Motor neuron (in vitro differentiated cells): ENCODE measurements at regions of chr11 and their contacts with region 1.

Region 1: DNA sequence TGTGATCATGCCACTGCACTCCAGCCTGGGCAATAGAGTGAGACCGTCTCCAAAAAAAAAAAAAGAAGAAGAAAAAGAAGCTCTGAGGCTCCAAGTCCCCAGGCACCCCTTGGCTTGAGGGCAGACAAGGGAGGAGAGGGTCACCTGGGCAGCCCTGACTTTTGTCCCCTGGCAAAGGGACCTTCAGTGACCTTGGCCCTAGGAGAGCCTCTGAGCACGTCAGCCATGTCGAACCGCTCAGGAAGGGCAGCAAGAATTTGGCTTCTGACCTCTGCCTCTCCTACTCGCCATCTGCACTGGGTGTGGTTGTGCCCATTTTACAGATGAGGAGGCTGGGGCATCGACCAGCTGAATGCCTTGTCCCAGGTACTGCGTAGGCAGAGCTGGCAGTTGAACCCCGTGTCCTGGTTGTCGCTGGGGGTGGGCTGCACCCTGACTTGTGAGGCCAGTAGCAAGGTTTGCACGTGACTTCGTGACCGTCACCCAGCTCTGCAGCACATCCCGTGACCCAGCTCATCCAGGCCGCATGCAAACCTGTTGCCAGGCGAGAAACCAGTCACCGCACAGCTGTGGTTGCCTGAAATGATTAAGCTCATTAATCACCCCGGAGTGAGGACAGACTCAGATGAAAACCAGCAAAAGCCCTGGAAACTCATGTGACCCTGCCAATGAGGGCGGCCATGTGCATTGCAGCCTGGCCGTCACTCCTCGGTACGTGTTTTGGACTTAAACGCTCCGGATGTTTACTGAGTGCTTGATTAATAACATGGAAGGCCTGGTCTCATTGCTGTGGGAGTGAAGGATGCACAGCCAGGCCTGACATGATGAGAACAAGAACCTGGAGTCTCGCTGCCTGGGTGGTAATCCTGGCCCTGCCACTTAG is 47.7 kb upstream of the PPP6R3 start:
- ATAC-seq: peak in 7 of 8 experiments; percentile 58 to 92 (median 83)
- H3K4me3 ChIP-seq: no peak overlapping the region
- H3K27ac ChIP-seq: peak overlapping the region in 1 of 2 donors; percentile 69
- H3K4me1 ChIP-seq: peaks cover 0 to 14% of the 10 kb centered on the region in 2 donors

Region 2: GRCh38 chr11:68235650-68236049 is 177.2 kb before region 1 on chr11:
- in situ Hi-C with region 1: loop called in 1 of 9 experiments (anchors 25 kb)
- ATAC-seq: no peak
- H3K4me3 ChIP-seq: no peak overlapping the region
- H3K27ac ChIP-seq: no peak overlapping the region
- H3K4me1 ChIP-seq: no peaks in the 10 kb centered on the region